Activated CD4-positive, alpha-beta T cell treated with anti-CD3 and anti-CD28 coated beads for 36 hours (primary cell): ENCODE measurements at regions of chr12 and their contacts with region 1.

Region 1: DNA sequence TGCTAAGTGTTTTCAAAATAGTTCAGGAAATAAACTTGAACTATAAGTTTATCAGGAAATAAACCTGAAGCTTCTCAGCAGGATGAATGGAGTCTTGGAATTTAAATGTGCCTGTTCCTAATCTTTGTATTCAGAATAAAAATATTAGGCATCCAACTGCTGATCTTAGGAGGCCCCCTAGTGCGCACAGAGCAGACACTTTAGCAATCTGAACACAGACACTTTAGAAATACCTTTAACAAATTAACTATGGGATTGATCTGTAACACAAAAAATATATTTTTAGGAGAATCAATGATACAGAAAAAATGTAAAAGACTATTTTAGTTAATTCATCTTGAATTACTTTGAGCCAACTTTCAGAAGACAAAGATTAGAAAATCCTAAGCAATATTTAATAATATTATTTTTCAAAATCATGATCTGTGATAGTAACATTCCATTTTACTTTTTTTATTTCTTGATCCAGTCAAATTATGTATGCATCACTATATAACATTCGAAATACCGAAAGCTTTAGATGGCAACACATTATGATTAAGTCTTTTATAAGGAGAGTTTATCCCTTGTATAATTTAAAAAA is 80.9 kb downstream of the SLC41A2 start:
- DNase-seq: peak; percentile 46
- ATAC-seq: peak; percentile 66
- H3K4me3 Mint-ChIP-seq: no peak overlapping the region
- H3K27ac Mint-ChIP-seq: no peak overlapping the region
- H3K4me1 Mint-ChIP-seq: no peaks in the 10 kb centered on the region
- H3K27me3 Mint-ChIP-seq: no peaks in the 10 kb centered on the region

Region 2: GRCh38 chr12:104733717-104734175 is 143.5 kb before region 1 on chr12:
- CTCF ChIA-PET with region 1: no interaction called
- POLR2A ChIA-PET with region 1: no interaction called
- intact Hi-C with region 1: loop called in 1 of 2 experiments (anchors 5 kb)
- DNase-seq: peak; percentile 69
- ATAC-seq: peak; percentile 72
- H3K4me3 Mint-ChIP-seq: no peak overlapping the region
- H3K27ac Mint-ChIP-seq: no peak overlapping the region
- H3K4me1 Mint-ChIP-seq: peaks cover 48% of the 10 kb centered on the region
- H3K27me3 Mint-ChIP-seq: no peaks in the 10 kb centered on the region

Region 3: GRCh38 chr12:104858611-104859543 is 18.3 kb before region 1 on chr12:
- CTCF ChIA-PET with region 1: no interaction called
- POLR2A ChIA-PET with region 1: no interaction called
- intact Hi-C with region 1: no loop called
- DNase-seq: no peak
- ATAC-seq: no peak
- H3K4me3 Mint-ChIP-seq: no peak overlapping the region
- H3K27ac Mint-ChIP-seq: no peak overlapping the region
- H3K4me1 Mint-ChIP-seq: no peaks in the 10 kb centered on the region
- H3K27me3 Mint-ChIP-seq: no peaks in the 10 kb centered on the region